ENCODE measurements at regions of chr17 and their contacts with region 1.

Region 1: DNA sequence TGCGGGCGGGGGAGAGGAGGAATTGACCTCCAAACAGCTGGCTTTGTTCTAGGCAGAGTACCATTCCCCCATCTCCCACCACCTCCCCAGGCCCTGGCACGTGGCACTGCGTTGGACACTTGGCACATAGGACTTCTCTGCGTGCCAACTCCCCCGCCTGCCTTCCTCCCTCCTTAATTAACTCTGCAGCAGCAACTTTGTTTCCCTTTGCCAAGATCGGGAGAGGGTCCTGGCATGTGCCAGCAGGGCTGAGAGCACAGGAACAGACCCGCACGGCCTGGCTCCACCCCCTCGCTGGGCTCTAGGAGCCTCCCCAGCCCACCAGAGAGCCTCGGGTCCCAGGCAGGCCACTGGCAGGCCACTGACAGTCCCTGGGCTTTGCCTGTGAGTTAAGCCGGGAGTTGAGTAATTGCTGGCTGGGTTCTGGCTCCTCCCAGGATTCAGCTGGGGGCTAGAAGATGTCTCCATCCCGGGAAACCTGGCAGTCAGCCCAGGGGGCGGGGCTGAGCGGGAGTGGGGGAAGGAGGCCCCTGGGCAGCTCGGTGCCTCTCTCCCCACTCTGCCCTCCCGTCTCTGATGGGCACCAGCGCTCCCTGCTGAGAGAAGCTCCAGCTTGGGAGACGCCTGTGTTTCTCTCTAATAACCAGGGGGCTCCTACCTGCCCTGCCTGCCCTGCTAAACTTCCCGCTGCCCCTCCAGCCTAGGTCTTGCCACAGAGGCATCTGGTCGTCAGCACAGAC is 224.0 kb upstream of the TNRC6C start:
- DNase-seq: peak; percentile 42
- H3K4me3 ChIP-seq: no peak overlapping the region
- H3K27ac ChIP-seq: peak overlapping the region; percentile 48 to 62
- H3K4me1 ChIP-seq: peaks cover 8% of the 10 kb centered on the region
- H3K27me3 ChIP-seq: no peaks in the 10 kb centered on the region
- CTCF ChIP-seq: no peak
- POLR2A ChIP-seq: no peak

Region 2: GRCh38 chr17:77542551-77543490 is 191.7 kb before region 1 on chr17:
- intact Hi-C with region 1: loop called (anchors 5 kb)
- DNase-seq: peak; percentile 82
- H3K4me3 ChIP-seq: no peak overlapping the region
- H3K27ac ChIP-seq: peak overlapping the region in 1 of 2 donors; percentile 25
- H3K4me1 ChIP-seq: no peaks in the 10 kb centered on the region
- H3K27me3 ChIP-seq: no peaks in the 10 kb centered on the region
- CTCF ChIP-seq: peak; percentile 47 to 89 (median 78)
- POLR2A ChIP-seq: no peak

Region 3: GRCh38 chr17:77602062-77602746 is 132.3 kb before region 1 on chr17:
- intact Hi-C with region 1: loop called (anchors 5 kb)
- DNase-seq: peak; percentile 85
- H3K4me3 ChIP-seq: no peak overlapping the region
- H3K27ac ChIP-seq: peak overlapping the region; percentile 77 to 80
- H3K4me1 ChIP-seq: peaks cover 8% of the 10 kb centered on the region
- H3K27me3 ChIP-seq: no peaks in the 10 kb centered on the region
- CTCF ChIP-seq: no peak
- POLR2A ChIP-seq: no peak

Region 4: GRCh38 chr17:77677211-77677610 is 57.3 kb before region 1 on chr17:
- intact Hi-C with region 1: loop called (anchors 5 kb)
- DNase-seq: no peak
- H3K4me3 ChIP-seq: no peak overlapping the region
- H3K27ac ChIP-seq: no peak overlapping the region
- H3K4me1 ChIP-seq: peaks cover 1% of the 10 kb centered on the region
- H3K27me3 ChIP-seq: no peaks in the 10 kb centered on the region
- CTCF ChIP-seq: no peak
- POLR2A ChIP-seq: no peak